ENCODE measurements at regions of chr4 and their contacts with region 1.

Region 1: DNA sequence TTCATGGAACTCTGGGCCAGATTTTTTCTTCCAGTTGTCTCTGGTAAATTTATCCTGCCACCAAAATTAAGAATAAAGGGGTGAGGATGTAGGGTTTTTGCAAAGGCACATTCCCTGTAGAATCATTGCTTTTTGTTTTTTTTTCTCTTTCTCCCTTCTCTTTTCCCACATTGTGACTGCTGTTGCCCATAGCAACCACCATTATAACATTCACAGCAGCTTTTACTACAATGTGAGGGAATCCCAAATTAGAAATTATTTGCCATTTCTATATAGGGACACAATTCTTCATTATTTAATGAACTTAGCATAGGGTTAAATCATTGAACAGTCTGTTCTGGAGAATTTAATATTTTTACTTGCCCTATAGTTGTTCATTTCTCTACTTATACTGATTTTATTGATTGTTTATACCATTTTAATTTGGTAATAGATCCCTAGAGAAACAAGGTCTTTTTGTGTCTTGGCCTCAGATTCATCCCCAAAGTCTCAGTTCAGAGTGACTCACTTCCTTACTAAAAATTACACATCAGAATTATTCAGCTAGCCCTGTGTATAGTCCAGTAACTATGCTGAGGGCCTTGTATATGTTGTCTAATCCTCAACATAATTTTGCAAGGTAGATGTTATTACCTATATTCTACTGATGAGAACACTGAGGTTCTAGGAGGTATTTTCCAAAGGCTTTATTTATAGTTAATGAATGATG is 80.8 kb upstream of the ANK2 start:
- DNase-seq: no peak
- H3K4me3 ChIP-seq: no peak overlapping the region
- H3K27ac ChIP-seq: no peak overlapping the region
- H3K4me1 ChIP-seq: no peaks in the 10 kb centered on the region
- H3K27me3 ChIP-seq: no peaks in the 10 kb centered on the region
- CTCF ChIP-seq: no peak
- POLR2A ChIP-seq: no peak

Region 2: GRCh38 chr4:112951362-112952312 is 17.0 kb before region 1 on chr4:
- CTCF ChIA-PET with region 1: interaction called, 21 read pairs
- POLR2A ChIA-PET with region 1: no interaction called
- dilution Hi-C with region 1: no loop called
- intact Hi-C with region 1: no loop called
- DNase-seq: peak; percentile 39
- H3K4me3 ChIP-seq: no peak overlapping the region
- H3K27ac ChIP-seq: no peak overlapping the region
- H3K4me1 ChIP-seq: no peaks in the 10 kb centered on the region
- H3K27me3 ChIP-seq: peaks cover 0 to 3% of the 10 kb centered on the region in 2 experiments
- CTCF ChIP-seq: peak; percentile 19 to 25
- POLR2A ChIP-seq: no peak

Measured in endothelial cell of umbilical vein (primary cell).